ENCODE measurements at regions of chr13 and their contacts with region 1.

Region 1: GRCh38 chr13:21297914-21298831 is 121.7 kb downstream of the MRPL57 start:
- DNase-seq: peak; percentile 94
- ATAC-seq: peak; percentile 100
- H3K4me3 ChIP-seq: peak overlapping the region; percentile 93
- H3K27ac ChIP-seq: peak overlapping the region; percentile 75
- H3K4me1 ChIP-seq: peaks cover 6% of the 10 kb centered on the region
- H3K27me3 ChIP-seq: no peaks in the 10 kb centered on the region
- CTCF ChIP-seq: peak; percentile 92

Region 2: GRCh38 chr13:21106089-21106488 is 192.1 kb before region 1 on chr13:
- intact Hi-C with region 1: no loop called
- DNase-seq: no peak
- ATAC-seq: no peak
- H3K4me3 ChIP-seq: no peak overlapping the region
- H3K27ac ChIP-seq: no peak overlapping the region
- H3K4me1 ChIP-seq: no peaks in the 10 kb centered on the region
- H3K27me3 ChIP-seq: no peaks in the 10 kb centered on the region
- CTCF ChIP-seq: no peak

Region 3: GRCh38 chr13:21149568-21149967 is 148.6 kb before region 1 on chr13:
- intact Hi-C with region 1: no loop called
- DNase-seq: no peak
- ATAC-seq: no peak
- H3K4me3 ChIP-seq: no peak overlapping the region
- H3K27ac ChIP-seq: no peak overlapping the region
- H3K4me1 ChIP-seq: no peaks in the 10 kb centered on the region
- H3K27me3 ChIP-seq: no peaks in the 10 kb centered on the region
- CTCF ChIP-seq: no peak

Region 4: GRCh38 chr13:21476893-21477472 is 178.8 kb after region 1 on chr13:
- intact Hi-C with region 1: loop called (anchors 5 kb)
- DNase-seq: peak; percentile 89
- ATAC-seq: peak; percentile 98
- H3K4me3 ChIP-seq: peak overlapping the region; percentile 44
- H3K27ac ChIP-seq: no peak overlapping the region
- H3K4me1 ChIP-seq: peaks cover 3% of the 10 kb centered on the region
- H3K27me3 ChIP-seq: no peaks in the 10 kb centered on the region
- CTCF ChIP-seq: peak; percentile 99

Measured in upper lobe of right lung (tissue), 1 donor.